HEK293 (cell line): ENCODE measurements at regions of chr3 and their contacts with region 1.

Region 1: DNA sequence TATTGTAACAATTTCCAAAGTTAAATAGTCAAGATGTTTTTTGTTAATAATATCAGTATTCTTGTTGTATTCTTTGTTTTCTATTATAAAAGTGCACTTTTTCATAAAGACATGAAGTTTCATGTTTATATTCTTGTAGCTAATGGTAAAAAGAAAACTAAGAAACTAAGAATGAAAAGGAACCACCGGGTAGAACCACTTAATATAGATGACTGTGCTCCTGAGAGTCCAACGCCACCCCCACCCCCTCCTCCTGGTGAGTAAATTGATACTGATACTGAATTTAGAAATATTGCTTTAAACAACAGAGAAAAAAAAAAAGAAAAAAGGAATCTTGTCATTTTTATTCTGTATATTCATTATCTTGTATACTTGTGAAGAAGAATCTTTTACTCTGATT is 13.4 kb downstream of the DHFR2 start:
- H3K4me3 ChIP-seq: no peak overlapping the region
- H3K27ac ChIP-seq: no peak overlapping the region
- H3K4me1 ChIP-seq: no peaks in the 10 kb centered on the region
- CTCF ChIP-seq: no peak

Region 2: GRCh38 chr3:93961489-93961888 is 87.8 kb before region 1 on chr3:
- CTCF ChIA-PET with region 1: no interaction called
- POLR2A ChIA-PET with region 1: no interaction called
- H3K4me3 ChIP-seq: no peak overlapping the region
- H3K27ac ChIP-seq: no peak overlapping the region
- H3K4me1 ChIP-seq: no peaks in the 10 kb centered on the region
- CTCF ChIP-seq: no peak

Region 3: DNA sequence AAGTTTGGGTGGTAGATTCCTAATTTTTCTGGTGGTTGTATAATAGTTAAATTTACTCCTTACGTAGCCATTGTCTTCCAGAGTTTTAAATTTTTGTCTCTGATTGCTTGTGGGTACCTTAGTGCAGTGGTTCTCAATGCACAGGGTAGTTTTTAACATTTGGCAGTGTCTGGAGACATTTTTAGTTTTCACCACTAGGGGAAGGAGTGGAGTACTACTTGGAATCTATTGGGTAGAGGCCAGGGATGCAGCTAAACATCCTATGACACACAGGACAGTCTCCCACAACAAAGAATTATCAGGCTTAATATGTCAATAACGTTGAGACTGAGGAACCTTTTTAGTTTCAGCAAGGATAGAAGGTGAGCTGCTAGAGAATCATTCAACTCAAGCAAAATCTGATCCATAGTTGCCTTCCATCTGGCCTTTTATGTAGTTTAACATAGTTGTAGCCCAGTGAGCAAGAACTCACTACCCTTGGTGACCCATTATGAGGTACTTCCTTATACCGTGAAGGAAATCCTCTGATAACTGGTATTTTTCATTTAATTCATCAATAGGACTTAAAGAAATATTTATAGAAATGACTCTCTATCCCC is 12.3 kb before region 1 on chr3:
- CTCF ChIA-PET with region 1: interaction called, 10 read pairs
- POLR2A ChIA-PET with region 1: no interaction called
- H3K4me3 ChIP-seq: no peak overlapping the region
- H3K27ac ChIP-seq: no peak overlapping the region
- H3K4me1 ChIP-seq: no peaks in the 10 kb centered on the region
- CTCF ChIP-seq: no peak

Region 4: DNA sequence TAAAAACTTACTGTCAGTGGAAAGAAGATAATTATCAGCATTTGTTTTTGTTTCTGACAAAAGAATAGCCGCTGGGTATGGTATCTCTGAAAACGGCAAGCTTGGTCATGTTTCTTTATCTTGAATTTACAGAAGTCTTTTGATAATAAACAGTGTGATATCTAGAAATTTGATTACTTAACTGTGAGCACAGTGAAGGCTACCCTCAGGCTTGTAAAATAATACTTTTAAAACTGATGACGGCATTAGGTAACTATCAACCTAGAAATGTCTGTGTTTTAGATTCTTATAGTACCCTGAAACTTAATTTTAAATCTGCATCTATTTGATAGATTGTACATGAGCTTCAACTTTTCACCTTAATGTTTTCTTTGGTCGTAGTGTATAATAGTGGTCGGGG is 57.0 kb after region 1 on chr3:
- CTCF ChIA-PET with region 1: no interaction called
- POLR2A ChIA-PET with region 1: no interaction called
- H3K4me3 ChIP-seq: no peak overlapping the region
- H3K27ac ChIP-seq: no peak overlapping the region; the same call in 1 of the 2 replicates
- H3K4me1 ChIP-seq: peaks cover 16% of the 10 kb centered on the region
- CTCF ChIP-seq: no peak

Region 5: DNA sequence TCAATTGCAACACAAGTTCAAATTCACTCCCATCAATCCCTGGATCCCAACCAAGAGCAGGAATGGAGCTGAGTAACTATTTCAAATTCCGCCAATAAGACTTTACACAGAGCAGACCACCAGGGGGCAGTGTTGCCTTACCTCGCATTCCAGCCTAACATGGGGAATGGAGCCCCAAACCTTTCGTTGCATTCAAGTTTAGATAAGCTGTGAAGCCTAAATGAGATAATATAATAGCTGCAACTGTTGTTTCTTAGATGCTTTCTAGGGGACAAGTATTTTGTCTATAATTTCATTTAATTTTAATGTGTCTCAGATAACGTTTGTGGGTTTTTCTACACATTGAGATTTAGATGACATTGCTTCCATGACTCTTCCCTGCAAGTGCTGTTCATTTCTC is 200.3 kb after region 1 on chr3:
- CTCF ChIA-PET with region 1: no interaction called
- POLR2A ChIA-PET with region 1: no interaction called
- H3K4me3 ChIP-seq: no peak overlapping the region
- H3K27ac ChIP-seq: no peak overlapping the region
- H3K4me1 ChIP-seq: no peaks in the 10 kb centered on the region; the same call in 1 of the 2 replicates
- CTCF ChIP-seq: peak; percentile 55